CD4-positive, alpha-beta memory T cell (primary cell): ENCODE measurements at regions of chr10 and their contacts with region 1.

Region 1: DNA sequence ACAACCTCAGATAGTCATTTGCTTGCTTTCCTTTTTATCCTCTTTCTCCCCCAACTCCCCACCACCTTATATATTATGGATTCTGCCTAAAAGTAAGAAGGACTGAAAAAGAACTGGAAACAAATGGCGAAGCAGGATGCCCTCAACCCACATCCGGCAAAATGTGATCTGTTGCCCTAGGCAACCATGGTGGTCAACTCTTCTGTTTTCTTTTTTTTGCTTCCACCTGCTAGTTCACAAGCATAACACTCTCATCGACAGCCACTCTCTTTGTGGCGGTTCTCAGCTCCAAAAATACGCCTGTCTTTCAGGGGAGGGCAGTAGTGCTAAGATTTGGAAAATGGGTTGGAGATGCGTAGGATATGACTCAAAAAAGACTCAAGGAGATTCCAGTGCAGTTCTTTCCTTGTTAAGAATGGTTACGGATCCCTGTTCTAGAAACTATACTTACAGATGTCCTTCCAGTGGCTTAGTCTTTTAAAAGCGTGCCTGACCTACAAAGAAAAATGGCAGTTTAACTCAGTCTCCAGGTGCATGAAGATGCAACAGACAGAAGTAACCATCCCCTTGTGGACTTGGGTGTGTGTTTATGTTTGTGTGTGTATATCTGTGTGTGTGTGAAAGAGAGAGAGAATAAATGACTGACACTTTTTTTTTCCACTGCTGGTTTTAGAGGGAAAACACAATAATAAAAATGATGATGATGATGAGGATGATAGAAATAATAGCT is 10.7 kb downstream of the APBB1IP start:
- DNase-seq: peak; percentile 87 to 91 (median 89)
- H3K4me3 ChIP-seq: peak overlapping the region; percentile 31 to 37
- H3K4me3 Mint-ChIP-seq: peak overlapping the region; percentile 76 to 89 (median 84)
- H3K27ac ChIP-seq: peak overlapping the region; percentile 68
- H3K27ac Mint-ChIP-seq: peak overlapping the region; percentile 92 to 99 (median 98)
- H3K4me1 ChIP-seq: peaks cover 95% of the 10 kb centered on the region
- H3K4me1 Mint-ChIP-seq: peaks cover 77 to 93% (median 85%) of the 10 kb centered on the region in 4 donors
- H3K27me3 ChIP-seq: no peaks in the 10 kb centered on the region
- H3K27me3 Mint-ChIP-seq: no peaks in the 10 kb centered on the region

Region 2: DNA sequence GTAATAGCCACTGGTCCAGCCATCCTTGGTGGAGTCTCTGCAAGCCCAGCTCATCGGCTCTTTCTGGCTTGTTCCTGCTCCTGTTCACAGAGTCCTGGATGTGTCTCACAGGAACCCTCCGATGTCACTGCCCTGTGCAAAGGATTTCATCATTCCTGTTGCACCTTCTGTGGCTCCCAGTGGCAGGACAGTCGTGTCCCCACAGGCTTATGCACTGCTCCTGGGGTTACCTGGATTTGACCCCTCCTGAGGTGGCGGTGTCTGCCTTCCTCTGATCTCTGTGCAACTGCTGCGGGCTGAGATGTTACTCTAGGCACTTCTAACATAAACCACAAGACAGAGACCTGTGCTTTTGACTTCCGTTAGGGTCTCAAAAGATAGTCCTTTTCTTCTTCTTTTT is 19.8 kb after region 1 on chr10:
- CTCF ChIA-PET with region 1: interaction called, 13 read pairs
- POLR2A ChIA-PET with region 1: interaction called, 48 read pairs
- intact Hi-C with region 1: loop called (anchors 2 kb)
- DNase-seq: peak; percentile 64 to 79 (median 66)
- H3K4me3 ChIP-seq: peak overlapping the region in 1 of 2 donors; percentile 23
- H3K4me3 Mint-ChIP-seq: peak overlapping the region; percentile 69 to 89 (median 82)
- H3K27ac ChIP-seq: peak overlapping the region; percentile 49
- H3K27ac Mint-ChIP-seq: peak overlapping the region; percentile 61 to 94 (median 93)
- H3K4me1 ChIP-seq: peaks cover 97% of the 10 kb centered on the region
- H3K4me1 Mint-ChIP-seq: peaks cover 62 to 98% (median 78%) of the 10 kb centered on the region in 4 donors
- H3K27me3 ChIP-seq: no peaks in the 10 kb centered on the region
- H3K27me3 Mint-ChIP-seq: no peaks in the 10 kb centered on the region

Region 3: GRCh38 chr10:26481914-26482550 is 33.2 kb after region 1 on chr10:
- CTCF ChIA-PET with region 1: interaction called, 3 read pairs
- POLR2A ChIA-PET with region 1: interaction called, 26 read pairs
- intact Hi-C with region 1: loop called (anchors 1 kb)
- DNase-seq: peak; percentile 70 to 81 (median 73)
- H3K4me3 ChIP-seq: peak overlapping the region in 1 of 2 donors; percentile 9
- H3K4me3 Mint-ChIP-seq: peak overlapping the region; percentile 36 to 88 (median 70)
- H3K27ac ChIP-seq: peak overlapping the region; percentile 51
- H3K27ac Mint-ChIP-seq: peak overlapping the region; percentile 81 to 97 (median 92)
- H3K4me1 ChIP-seq: peaks cover 96% of the 10 kb centered on the region
- H3K4me1 Mint-ChIP-seq: peaks cover 62 to 81% (median 71%) of the 10 kb centered on the region in 4 donors
- H3K27me3 ChIP-seq: no peaks in the 10 kb centered on the region
- H3K27me3 Mint-ChIP-seq: no peaks in the 10 kb centered on the region

Region 4: DNA sequence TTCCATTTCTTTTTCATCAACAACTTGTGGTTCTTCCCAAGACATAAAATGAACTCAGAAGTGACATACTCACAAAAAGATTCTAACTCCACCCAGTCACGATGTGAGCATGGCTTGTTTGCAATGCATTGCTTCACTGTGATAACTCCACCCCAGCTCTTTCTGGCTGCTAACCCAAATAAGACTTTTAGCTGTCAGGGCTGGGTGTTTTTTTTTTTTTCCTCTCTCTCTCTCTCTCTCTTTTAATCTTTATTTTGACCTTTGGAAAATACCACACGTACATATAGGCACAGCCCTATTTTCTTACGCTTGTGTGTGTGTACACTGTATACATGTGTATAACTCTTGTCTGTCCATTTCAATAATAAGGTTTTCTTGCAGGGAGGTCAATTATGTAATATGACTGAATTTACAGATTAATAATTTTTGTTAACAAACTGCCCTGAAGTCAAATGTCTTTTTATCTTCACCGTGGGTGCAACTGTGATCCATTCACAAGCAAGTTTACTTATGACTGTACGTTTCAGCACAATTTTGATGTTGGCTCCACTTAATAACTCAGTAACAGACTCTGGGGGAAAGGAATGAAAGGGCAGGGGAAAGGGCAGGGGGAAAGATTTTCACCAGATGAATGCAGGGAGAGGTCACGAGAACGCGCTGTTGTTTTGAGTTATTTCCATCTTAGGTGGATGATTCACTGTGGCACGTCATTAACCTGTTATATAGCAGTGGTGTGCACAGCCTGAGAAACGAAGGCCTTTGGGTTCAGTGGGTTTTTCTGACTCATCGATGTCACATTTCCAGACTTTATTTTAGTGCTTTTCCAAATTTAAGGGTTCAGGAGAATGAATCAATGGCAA is 38.4 kb after region 1 on chr10:
- CTCF ChIA-PET with region 1: no interaction called
- POLR2A ChIA-PET with region 1: interaction called, 14 read pairs
- intact Hi-C with region 1: loop called (anchors 1 kb)
- DNase-seq: peak; percentile 58 to 91 (median 70)
- H3K4me3 ChIP-seq: peak overlapping the region in 1 of 2 donors; percentile 49
- H3K4me3 Mint-ChIP-seq: peak overlapping the region; percentile 55 to 77 (median 68)
- H3K27ac ChIP-seq: peak overlapping the region; percentile 73
- H3K27ac Mint-ChIP-seq: peak overlapping the region; percentile 94 to 97 (median 95)
- H3K4me1 ChIP-seq: peaks cover 76% of the 10 kb centered on the region
- H3K4me1 Mint-ChIP-seq: peaks cover 53 to 67% (median 58%) of the 10 kb centered on the region in 4 donors
- H3K27me3 ChIP-seq: no peaks in the 10 kb centered on the region
- H3K27me3 Mint-ChIP-seq: no peaks in the 10 kb centered on the region

Region 5: DNA sequence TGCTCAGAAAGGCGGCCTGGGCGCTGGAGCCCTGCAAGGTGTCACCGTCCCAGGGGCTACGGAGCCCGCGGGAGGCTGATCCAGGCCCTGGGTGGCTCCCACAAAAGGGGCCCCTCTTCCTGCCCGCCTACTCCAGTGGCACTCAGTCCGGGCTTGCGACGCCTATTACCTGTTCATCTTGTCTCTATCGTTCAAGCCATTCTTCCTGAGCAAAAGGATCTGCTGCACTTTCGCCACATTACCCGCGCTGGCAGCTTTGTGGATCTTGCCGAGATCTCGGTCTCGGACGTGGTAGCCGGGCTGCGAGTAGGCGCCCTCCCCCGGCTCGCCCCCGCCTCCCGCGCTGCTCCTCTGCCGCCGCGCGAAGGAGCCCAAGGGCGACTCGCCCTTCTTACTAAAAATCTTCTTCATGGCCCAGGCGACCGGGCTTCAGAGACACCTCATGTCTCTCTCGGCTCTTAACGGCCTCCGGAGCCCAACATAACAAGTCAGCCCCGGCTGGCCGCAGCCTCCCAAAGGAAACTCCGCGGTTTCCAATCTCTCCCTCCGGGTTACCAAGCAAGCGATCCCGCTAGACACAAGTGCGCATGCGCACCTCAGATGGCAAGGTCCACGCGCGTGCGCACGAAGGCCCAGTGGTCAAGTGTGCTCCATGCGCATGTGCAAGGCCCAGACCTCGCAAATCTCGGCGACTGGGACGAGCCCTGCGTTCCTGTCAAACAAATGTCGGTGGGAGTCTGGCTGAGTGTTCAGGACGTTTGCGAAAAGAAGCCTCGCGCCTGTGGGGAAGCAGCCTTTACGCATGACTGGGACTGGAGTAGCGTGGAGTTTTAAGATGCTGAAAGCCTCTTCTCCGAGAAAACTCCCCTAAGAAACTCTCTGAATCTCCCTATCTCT is 651.3 kb after region 1 on chr10 and contains the start of gene ANKRD26:
- CTCF ChIA-PET with region 1: no interaction called
- POLR2A ChIA-PET with region 1: no interaction called
- intact Hi-C with region 1: loop called (anchors 2 kb)
- DNase-seq: peak; percentile 95 to 96 (median 95)
- H3K4me3 ChIP-seq: peak within 1 kb of the TSS; percentile 58 to 67
- H3K4me3 Mint-ChIP-seq: peak within 1 kb of the TSS; percentile 92 to 99 (median 96)
- H3K27ac ChIP-seq: peak within 1 kb of the TSS; percentile 76
- H3K27ac Mint-ChIP-seq: peak within 1 kb of the TSS; percentile 94 to 99 (median 98)
- H3K4me1 ChIP-seq: peaks cover 33% of the 10 kb centered on the region
- H3K4me1 Mint-ChIP-seq: peaks cover 21 to 49% (median 37%) of the 10 kb centered on the region in 4 donors
- H3K27me3 ChIP-seq: no peaks in the 10 kb centered on the region
- H3K27me3 Mint-ChIP-seq: no peaks in the 10 kb centered on the region
- total RNA-seq, gene ANKRD26: 10.7 to 11.6 TPM